A549 (cell line): ENCODE measurements at regions of chr17 and their contacts with region 1.

Region 1: GRCh38 chr17:42819944-42820535 is 4.0 kb downstream of the BECN1 start:
- DNase-seq: peak; percentile 84 to 85
- ATAC-seq: peak; percentile 44 to 66; a peak in 3 of 6 replicates
- H3K4me3 ChIP-seq: no peak overlapping the region
- H3K27ac ChIP-seq: no peak overlapping the region
- H3K4me1 ChIP-seq: peaks cover 21% of the 10 kb centered on the region
- CTCF ChIP-seq: peak; percentile 82
- EP300 ChIP-seq: no peak
- POLR2A ChIP-seq: no peak
- RAD21 ChIP-seq: peak; percentile 26 to 40; a peak in 2 of 5 replicates

Region 2: GRCh38 chr17:42744806-42745617 is 75.0 kb before region 1 on chr17 and contains the start of gene EZH1:
- CTCF ChIA-PET with region 1: interaction called, 10 read pairs
- POLR2A ChIA-PET with region 1: interaction called, 4 read pairs
- DNase-seq: peak; percentile 96 to 100
- ATAC-seq: peak; percentile 89 to 95
- H3K4me3 ChIP-seq: peak within 1 kb of the TSS; percentile 55
- H3K27ac ChIP-seq: peak within 1 kb of the TSS; percentile 79 to 91
- H3K4me1 ChIP-seq: peaks cover 9% of the 10 kb centered on the region; the same call in 2 of the 3 replicates
- CTCF ChIP-seq: no peak
- EP300 ChIP-seq: no peak
- POLR2A ChIP-seq: peak; percentile 63
- RAD21 ChIP-seq: no peak
- polyA plus RNA-seq, gene EZH1: 35.4 and 41.1 TPM in 2 replicates

Region 3: DNA sequence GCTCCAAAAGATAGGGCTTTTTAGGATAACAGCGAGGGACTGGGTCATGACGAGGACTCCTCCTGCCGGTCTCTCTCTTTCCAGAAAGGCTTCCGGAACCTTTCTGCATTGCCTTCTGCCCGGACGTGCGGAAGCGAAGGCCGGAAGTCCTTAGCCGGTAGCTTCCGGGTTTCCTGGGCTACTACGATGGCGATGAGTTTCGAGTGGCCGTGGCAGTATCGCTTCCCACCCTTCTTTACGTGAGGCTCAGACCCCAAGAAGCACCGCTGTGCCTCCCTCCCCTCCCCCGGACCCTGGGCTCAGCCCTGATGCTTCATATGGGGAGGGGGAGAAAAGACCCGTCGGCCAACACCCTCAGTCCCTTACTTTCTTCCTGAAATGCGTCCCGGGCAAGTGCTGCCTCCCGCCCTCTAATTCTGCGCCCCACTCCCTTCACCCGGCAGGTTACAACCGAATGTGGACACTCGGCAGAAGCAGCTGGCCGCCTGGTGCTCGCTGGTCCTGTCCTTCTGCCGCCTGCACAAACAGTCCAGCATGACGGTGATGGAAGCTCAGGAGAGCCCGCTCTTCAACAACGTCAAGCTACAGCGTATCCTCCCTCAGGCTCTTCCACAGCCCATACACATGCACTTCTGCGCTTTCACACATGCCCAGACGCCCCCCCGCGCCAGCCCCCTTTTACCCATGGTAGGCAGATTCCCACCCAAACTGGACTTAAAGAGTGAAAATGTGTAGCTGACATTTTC is 46.6 kb before region 1 on chr17 and contains the start of gene VPS25:
- CTCF ChIA-PET with region 1: interaction called, 24 read pairs
- POLR2A ChIA-PET with region 1: interaction called, 21 read pairs
- DNase-seq: peak; percentile 92 to 98
- ATAC-seq: peak; percentile 98
- H3K4me3 ChIP-seq: peak within 1 kb of the TSS; percentile 65
- H3K27ac ChIP-seq: peak within 1 kb of the TSS; percentile 80 to 97
- H3K4me1 ChIP-seq: peaks cover 21% of the 10 kb centered on the region
- CTCF ChIP-seq: no peak; the same call in 2 of the 3 replicates
- EP300 ChIP-seq: no peak
- POLR2A ChIP-seq: peak; percentile 96
- RAD21 ChIP-seq: peak; percentile 17 to 29; a peak in 3 of 5 replicates
- polyA plus RNA-seq, gene VPS25: 143 and 173 TPM in 2 replicates

Region 4: GRCh38 chr17:42798383-42799380 is 21.4 kb before region 1 on chr17 and contains the starts of genes CNTD1 and COA3:
- CTCF ChIA-PET with region 1: interaction called, 336 read pairs
- POLR2A ChIA-PET with region 1: interaction called, 14 read pairs
- DNase-seq: peak; percentile 92 to 96
- ATAC-seq: peak; percentile 97 to 99
- H3K4me3 ChIP-seq: peak within 1 kb of the TSS; percentile 72
- H3K27ac ChIP-seq: peak within 1 kb of the TSS; percentile 83 to 92
- H3K4me1 ChIP-seq: peaks cover 38% of the 10 kb centered on the region
- CTCF ChIP-seq: no peak
- EP300 ChIP-seq: no peak
- POLR2A ChIP-seq: peak; percentile 81
- RAD21 ChIP-seq: no peak
- polyA plus RNA-seq, gene CNTD1: 0.06 and 0.07 TPM in 2 replicates
- polyA plus RNA-seq, gene COA3: 126 and 170 TPM in 2 replicates

Region 5: DNA sequence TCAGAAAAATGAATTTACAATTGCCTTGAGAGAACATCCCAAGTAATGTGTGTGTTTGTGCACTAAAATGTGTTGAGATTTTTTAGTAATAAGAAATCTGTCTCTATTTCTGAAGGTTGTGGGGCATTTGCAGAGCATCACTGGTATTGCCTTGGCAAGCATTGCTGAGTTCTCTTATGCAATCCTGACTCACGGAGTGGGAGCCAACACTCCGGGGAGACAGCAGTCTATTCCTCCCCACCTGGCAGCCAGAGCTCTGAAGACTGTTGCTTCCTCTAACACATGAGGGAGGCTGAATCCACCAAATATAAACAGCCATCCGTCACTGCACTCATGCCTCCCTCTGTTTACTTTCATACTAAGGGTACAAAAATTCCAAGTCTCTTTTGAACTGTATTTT is 10.8 kb before region 1 on chr17:
- CTCF ChIA-PET with region 1: interaction called, 336 read pairs
- POLR2A ChIA-PET with region 1: interaction called, 24 read pairs
- DNase-seq: peak; percentile 27 to 49
- ATAC-seq: peak; percentile 63 to 65; a peak in 3 of 6 replicates
- H3K4me3 ChIP-seq: no peak overlapping the region
- H3K27ac ChIP-seq: peak overlapping the region in 1 of 2 experiments; percentile 9; a peak in 1 of 6 replicates
- H3K4me1 ChIP-seq: peaks cover 21% of the 10 kb centered on the region
- CTCF ChIP-seq: no peak
- EP300 ChIP-seq: no peak
- POLR2A ChIP-seq: no peak
- RAD21 ChIP-seq: no peak

Region 6: DNA sequence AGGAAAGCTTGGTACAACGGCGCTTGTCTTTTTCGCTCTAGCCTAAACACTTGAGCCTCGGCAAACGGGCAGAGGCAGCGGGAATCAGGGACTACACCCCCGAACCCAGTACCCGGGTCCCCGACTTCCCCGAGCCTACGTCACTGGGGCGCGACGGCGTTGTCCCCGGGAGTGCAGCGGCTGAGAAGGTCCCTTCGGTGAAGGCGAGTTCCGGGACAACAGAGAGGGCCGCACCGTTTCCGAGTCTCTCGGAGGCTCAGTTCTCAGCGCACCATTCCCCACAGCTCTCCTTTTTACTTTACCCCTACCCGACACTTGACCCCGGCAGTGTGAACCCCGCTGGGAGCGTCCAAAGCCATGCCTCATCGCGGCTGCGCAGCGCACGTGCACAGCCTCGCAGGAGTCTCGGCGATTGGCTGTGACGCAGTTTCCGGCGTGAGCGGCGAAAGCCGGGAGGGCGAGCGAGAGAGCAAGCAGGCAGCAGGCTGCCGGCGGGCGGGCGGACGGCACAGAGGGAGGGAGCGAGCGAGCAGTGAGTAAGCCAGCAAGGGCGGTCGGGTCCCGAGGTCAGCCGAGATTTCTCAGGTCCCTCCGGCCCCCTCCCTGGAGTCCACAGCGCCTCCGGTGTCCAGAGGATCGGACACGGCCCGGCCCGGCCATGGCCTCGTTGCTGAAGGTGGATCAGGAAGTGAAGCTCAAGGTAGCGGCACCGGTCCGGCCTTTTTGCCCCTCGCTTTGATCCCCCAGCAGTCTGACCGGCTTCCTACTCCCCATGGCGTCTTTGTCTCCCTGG is 13.1 kb after region 1 on chr17 and contains the start of gene PSME3:
- CTCF ChIA-PET with region 1: interaction called, 62 read pairs
- POLR2A ChIA-PET with region 1: interaction called, 30 read pairs
- DNase-seq: peak; percentile 92 to 96
- ATAC-seq: peak; percentile 96 to 97
- H3K4me3 ChIP-seq: peak within 1 kb of the TSS; percentile 94
- H3K27ac ChIP-seq: peak within 1 kb of the TSS; percentile 95 to 96
- H3K4me1 ChIP-seq: peaks cover 22% of the 10 kb centered on the region
- CTCF ChIP-seq: no peak
- EP300 ChIP-seq: no peak
- POLR2A ChIP-seq: peak; percentile 98
- RAD21 ChIP-seq: no peak; a peak in 1 of 5 replicates
- polyA plus RNA-seq, gene PSME3: 220 and 257 TPM in 2 replicates

Region 7: GRCh38 chr17:42937712-42938596 is 117.9 kb after region 1 on chr17:
- CTCF ChIA-PET with region 1: interaction called, 29 read pairs
- POLR2A ChIA-PET with region 1: interaction called, 3 read pairs
- DNase-seq: peak; percentile 78 to 81
- ATAC-seq: peak; percentile 96
- H3K4me3 ChIP-seq: no peak overlapping the region
- H3K27ac ChIP-seq: no peak overlapping the region
- H3K4me1 ChIP-seq: no peaks in the 10 kb centered on the region
- CTCF ChIP-seq: peak; percentile 93
- EP300 ChIP-seq: no peak
- POLR2A ChIP-seq: no peak
- RAD21 ChIP-seq: peak; percentile 97 to 98